HEK293 (cell line): ENCODE measurements at regions of chr15 and their contacts with region 1.

Region 1: DNA sequence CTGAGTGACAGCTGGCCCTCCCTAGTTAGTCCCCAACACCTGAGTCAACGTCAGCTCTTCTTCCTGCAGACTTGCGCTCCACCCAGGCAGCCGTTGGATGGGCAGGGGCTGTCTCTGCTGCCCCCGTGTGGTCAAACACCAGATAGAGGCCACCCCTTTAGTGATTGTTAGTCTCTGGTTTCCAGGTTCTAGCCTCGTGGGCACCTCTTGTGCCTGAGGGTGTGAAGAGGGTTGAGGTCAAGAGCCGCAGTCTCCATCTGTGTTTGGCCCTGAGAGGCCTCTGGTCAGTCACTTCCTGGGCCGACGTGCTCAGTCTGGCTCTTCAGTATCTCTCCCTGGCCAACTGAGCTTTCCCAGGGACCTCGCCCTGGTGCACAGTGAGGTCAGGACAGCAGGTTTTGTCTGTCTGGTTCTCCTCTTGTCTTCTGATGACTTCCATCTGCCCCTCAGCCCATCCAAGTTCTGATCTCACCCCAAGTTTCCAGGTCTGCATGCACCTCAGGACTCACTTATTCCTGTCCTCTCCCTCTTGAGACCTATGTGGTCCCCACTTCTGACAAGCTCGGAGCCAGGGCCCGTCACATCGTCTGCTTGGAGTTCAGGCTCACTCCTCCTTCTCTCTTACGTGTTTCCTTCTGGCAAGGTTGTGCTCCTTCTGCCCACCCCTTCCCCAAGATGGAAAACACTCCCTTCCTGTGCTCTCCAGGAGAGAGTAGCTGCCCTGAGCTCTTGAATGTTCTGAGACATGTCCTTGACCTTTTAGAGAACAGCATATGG is 20.9 kb downstream of the CD276 start:
- H3K4me3 ChIP-seq: no peak overlapping the region
- H3K27ac ChIP-seq: no peak overlapping the region
- H3K4me1 ChIP-seq: no peaks in the 10 kb centered on the region
- CTCF ChIP-seq: peak; percentile 84

Region 2: GRCh38 chr15:73305331-73306211 is 399.5 kb before region 1 on chr15:
- CTCF ChIA-PET with region 1: interaction called, 35 read pairs
- POLR2A ChIA-PET with region 1: no interaction called
- H3K4me3 ChIP-seq: no peak overlapping the region
- H3K27ac ChIP-seq: no peak overlapping the region
- H3K4me1 ChIP-seq: no peaks in the 10 kb centered on the region
- CTCF ChIP-seq: peak; percentile 77

Region 3: DNA sequence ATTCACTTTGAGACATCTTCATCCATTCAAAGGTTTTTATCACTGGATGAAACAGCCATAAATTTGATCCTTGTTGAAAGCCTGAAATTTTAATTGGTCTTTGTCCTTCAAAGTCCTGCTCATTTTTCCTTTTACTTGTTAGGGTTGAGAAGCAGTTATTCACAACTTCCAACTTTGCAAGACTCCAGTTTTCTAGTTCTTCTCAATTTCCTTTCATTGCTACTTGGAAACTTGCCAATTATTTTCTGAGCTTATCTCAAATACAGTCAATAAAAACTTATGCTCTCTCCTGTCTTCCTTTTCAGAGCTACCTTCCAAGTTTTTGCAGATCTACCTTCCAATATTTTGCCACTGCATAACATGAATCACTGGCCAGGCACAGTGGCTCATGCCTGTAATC is 44.6 kb before region 1 on chr15:
- CTCF ChIA-PET with region 1: interaction called, 15 read pairs
- POLR2A ChIA-PET with region 1: no interaction called
- H3K4me3 ChIP-seq: no peak overlapping the region
- H3K27ac ChIP-seq: no peak overlapping the region
- H3K4me1 ChIP-seq: peaks cover 15% of the 10 kb centered on the region; the same call in 1 of the 2 replicates
- CTCF ChIP-seq: no peak

Region 4: DNA sequence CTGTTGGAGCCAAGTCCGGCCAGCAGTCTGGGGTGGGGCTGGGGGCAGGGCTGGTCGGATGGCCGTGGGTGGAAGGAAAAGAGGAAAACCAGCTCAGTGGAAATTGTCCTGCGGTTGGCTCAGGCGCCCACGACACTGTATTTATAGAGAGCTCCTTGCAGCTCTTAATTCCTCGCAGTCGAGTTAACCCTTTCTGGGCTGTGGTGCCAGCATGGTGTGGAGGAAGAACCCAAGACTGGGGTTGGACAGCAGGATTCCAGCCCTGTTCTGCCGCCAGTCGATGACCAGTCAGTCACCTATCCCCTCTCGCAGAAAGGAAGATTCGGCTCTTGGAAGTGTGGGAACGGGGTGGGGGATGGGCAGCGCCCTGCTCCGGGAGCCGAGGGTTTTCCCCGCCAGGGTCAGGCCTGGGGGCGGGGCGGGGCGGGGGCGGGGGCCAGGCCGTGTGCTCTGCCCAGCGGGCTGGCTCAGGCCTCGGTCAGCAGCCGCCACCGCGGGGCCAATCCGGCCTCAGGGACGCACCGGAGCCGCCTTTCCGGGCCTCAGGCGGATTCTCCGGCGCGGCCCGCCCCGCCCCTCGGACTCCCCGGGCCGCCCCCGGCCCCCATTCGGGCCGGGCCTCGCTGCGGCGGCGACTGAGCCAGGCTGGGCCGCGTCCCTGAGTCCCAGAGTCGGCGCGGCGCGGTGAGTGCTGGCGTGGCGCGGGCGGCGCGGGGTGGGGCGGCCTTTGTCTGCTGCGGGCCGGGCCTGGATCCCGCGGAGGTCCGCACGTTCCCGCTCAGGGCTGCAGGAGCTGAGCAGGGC is 21.1 kb before region 1 on chr15 and contains the start of gene CD276:
- CTCF ChIA-PET with region 1: interaction called, 261 read pairs
- POLR2A ChIA-PET with region 1: no interaction called
- H3K4me3 ChIP-seq: peak within 1 kb of the TSS; percentile 76
- H3K27ac ChIP-seq: peak within 1 kb of the TSS; percentile 88
- H3K4me1 ChIP-seq: peaks cover 19% of the 10 kb centered on the region
- CTCF ChIP-seq: no peak; the same call in none of the 2 replicates

Region 5: DNA sequence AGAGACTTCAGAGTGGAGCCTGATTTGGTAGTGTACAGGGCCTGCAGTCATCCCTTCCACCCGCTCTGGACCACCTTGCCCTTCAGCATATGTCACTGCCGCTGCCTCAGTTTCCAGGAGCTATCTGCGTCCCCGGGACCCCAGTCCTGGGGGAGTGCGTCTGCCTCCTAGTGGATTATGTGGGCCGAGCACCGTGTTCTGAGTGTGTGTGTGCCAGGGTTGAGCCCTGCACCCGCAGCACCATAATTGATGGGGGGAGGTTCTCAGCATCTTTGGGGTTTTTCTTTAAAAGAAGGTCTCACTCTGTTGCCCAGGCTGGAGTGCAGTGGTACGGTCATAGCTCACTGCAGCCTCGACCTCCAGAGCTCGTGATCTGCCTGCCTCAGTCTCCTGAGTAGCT is 12.7 kb after region 1 on chr15:
- CTCF ChIA-PET with region 1: interaction called, 35 read pairs
- POLR2A ChIA-PET with region 1: interaction called, 3 read pairs
- H3K4me3 ChIP-seq: no peak overlapping the region
- H3K27ac ChIP-seq: no peak overlapping the region
- H3K4me1 ChIP-seq: no peaks in the 10 kb centered on the region
- CTCF ChIP-seq: peak; percentile 15; the same call in 1 of the 2 replicates

Region 6: GRCh38 chr15:73781038-73781925 is 76.2 kb after region 1 on chr15:
- CTCF ChIA-PET with region 1: interaction called, 14 read pairs
- POLR2A ChIA-PET with region 1: no interaction called
- H3K4me3 ChIP-seq: no peak overlapping the region
- H3K27ac ChIP-seq: no peak overlapping the region
- H3K4me1 ChIP-seq: no peaks in the 10 kb centered on the region
- CTCF ChIP-seq: peak; percentile 70; the same call in 1 of the 2 replicates